ENCODE measurements at regions of chr5 and their contacts with region 1.

Region 1: DNA sequence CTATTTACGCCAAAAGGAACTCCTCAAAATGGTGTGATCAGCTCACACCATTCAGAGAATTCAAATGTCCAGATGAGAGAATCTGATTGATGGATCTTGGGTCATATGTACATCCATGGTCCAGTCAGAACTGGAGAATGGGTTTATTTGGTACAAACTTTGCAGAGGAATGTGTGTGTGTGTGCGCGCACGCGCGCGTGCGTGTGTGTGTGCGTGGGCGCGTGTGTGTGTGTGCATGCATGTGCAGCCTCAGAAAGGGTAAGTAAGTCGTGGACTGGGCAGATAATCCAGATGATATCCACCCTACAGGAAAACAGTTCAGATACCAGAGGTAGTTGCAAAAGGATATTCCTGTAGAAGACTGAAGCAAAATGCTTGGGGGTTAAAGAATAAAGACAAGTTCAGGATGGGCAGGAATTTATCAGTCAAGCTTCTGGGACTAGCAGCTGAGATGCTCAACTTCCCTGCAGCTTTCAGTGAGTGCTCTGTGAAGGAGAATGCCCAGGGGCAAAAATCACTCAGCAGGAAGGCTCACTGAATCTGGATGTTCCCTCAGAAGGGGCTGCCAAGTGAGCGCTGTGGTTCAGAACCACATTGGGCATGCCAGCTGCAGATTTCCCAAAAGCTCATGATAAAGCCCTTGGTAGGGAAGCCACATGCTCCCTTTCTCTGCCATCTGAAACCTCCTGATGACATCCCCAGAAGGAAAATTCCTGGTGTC is 440.5 kb upstream of the SGCD start:
- DNase-seq: no peak
- H3K4me3 ChIP-seq: no peak overlapping the region
- H3K27ac ChIP-seq: no peak overlapping the region
- H3K4me1 ChIP-seq: no peaks in the 10 kb centered on the region
- H3K27me3 ChIP-seq: no peaks in the 10 kb centered on the region
- CTCF ChIP-seq: no peak
- POLR2A ChIP-seq: no peak

Region 2: DNA sequence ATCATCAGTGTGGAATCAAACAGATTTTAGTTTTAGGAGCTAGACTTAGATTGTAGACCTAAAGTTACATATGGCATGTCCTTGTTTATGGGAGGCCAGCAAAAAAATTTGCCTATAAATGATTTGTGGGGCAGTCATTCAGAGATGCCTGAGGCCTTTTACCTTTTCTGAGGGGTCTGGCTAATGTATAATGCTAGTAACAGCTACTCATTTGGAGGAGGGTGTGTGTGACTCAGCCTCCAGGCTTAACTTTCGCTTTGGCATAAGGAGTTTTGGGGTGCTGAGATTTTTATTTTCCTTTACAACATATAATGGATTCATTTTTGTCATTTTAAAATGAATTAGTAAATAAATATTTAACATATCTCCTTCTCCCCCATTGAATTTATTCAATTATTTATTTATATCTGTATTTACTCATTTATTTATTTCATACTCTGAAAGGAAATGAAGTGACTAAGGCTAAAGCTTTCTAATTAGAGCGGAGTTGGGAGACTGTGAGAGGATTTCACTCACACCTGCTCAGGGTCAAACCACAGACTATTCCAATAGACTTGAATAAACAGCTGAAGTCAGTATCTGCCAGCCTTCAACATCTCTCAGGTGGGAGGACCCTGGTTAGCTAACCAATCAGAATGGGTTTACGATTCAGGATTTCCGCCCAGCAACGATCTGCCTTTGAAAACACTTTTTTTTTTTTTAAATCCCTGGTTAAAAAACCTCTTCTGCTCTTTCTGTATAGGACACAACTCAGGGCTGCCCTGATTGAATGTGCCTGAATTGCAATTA is 47.0 kb before region 1 on chr5:
- intact Hi-C with region 1: loop called (anchors 2 kb)
- DNase-seq: no peak
- H3K4me3 ChIP-seq: no peak overlapping the region
- H3K27ac ChIP-seq: no peak overlapping the region
- H3K4me1 ChIP-seq: no peaks in the 10 kb centered on the region
- H3K27me3 ChIP-seq: no peaks in the 10 kb centered on the region
- CTCF ChIP-seq: no peak
- POLR2A ChIP-seq: no peak

Region 3: DNA sequence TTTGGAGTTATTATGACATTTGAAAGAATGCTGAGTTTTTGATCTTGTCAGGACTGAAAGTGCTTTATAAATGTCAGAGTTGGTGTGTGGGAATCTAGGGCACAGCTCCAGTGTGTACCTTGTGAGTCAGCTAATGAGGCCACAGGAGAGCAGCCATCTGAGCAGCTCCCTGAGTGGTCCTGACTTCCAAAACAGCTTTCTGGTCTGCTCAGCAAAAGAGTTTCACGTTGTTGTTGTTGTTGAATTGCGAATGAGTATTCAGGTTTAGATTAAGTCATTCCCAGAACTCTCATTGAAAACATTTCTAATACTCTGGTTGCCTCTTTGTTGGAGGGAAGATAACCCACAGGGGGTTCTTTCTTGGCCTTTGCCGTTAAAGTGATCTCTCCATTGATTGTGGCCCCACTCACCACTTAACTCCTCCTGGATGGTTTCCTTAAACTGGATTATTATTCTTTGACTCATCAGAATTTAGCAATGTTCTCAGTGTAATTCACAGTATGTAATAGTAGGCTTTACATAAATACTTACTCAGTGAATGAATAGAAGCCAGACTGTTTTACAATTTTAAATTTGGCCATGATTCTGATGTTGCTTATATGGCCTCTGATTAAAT is 315.4 kb after region 1 on chr5:
- intact Hi-C with region 1: no loop called
- DNase-seq: no peak
- H3K4me3 ChIP-seq: no peak overlapping the region
- H3K27ac ChIP-seq: no peak overlapping the region
- H3K4me1 ChIP-seq: no peaks in the 10 kb centered on the region
- H3K27me3 ChIP-seq: no peaks in the 10 kb centered on the region
- CTCF ChIP-seq: no peak
- POLR2A ChIP-seq: no peak